Ascending aorta (tissue), 2 donors: ENCODE measurements at regions of chr21 and their contacts with region 1.

Region 1: GRCh38 chr21:42939582-42940410 is 14.4 kb upstream of the ERVH48-1 start:
- DNase-seq: peak; percentile 34 to 95
- H3K4me3 ChIP-seq: peak overlapping the region in 1 of 2 donors; percentile 22
- H3K27ac ChIP-seq: peak overlapping the region; percentile 39 to 50
- H3K4me1 ChIP-seq: peaks cover 2% of the 10 kb centered on the region in 2 donors
- H3K27me3 ChIP-seq: no peaks in the 10 kb centered on the region
- CTCF ChIP-seq: no peak

Region 2: DNA sequence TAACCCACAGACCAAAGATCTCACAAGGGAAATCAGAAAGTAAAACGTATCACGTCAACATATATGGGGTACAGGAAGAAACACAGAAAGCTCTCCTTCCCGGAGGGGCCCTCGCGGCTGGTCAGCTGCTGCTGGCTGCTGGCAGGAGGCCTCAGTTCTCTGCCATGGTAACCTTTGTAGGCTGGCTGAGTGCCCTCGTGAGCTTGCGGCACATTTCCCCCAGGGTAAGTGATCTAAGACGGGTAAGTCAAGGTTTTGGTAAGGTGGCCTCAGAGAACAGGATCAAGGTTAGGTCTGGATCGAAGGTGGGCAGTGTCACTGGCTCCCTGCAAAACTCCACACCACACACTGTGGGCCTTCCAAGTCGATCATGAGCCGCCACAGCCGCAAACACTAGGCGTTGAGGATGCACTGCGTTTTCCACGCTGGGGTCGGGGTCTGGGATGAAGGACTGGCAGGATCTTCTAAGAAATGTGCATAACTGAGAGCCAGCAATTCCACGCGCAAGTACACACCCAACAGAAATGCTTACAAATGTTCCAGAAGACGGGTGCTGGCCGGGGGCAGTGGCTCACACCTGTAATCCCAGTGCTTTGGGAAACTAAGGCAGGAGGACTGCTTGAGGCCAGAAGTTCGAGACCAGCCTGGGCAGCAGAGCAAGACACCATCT is 94.4 kb before region 1 on chr21:
- intact Hi-C with region 1: no loop called
- DNase-seq: no peak
- H3K4me3 ChIP-seq: no peak overlapping the region
- H3K27ac ChIP-seq: no peak overlapping the region
- H3K4me1 ChIP-seq: peaks cover 0 to 4% of the 10 kb centered on the region in 2 donors
- H3K27me3 ChIP-seq: no peaks in the 10 kb centered on the region
- CTCF ChIP-seq: no peak

Region 3: GRCh38 chr21:42892931-42893755 is 46.7 kb before region 1 on chr21 and contains the start of gene NDUFV3:
- intact Hi-C with region 1: loop called (anchors 2 kb)
- DNase-seq: peak; percentile 99 to 100
- H3K4me3 ChIP-seq: peak within 1 kb of the TSS; percentile 87 to 91
- H3K27ac ChIP-seq: peak within 1 kb of the TSS; percentile 90 to 97
- H3K4me1 ChIP-seq: peaks cover 0 to 3% of the 10 kb centered on the region in 2 donors
- H3K27me3 ChIP-seq: no peaks in the 10 kb centered on the region
- CTCF ChIP-seq: no peak
- total RNA-seq, gene NDUFV3: 60.7 TPM

Region 4: GRCh38 chr21:42991992-42992740 is 52.4 kb after region 1 on chr21:
- intact Hi-C with region 1: loop called (anchors 10 kb)
- DNase-seq: peak in 1 of 2 donors; percentile 70
- H3K4me3 ChIP-seq: no peak overlapping the region
- H3K27ac ChIP-seq: no peak overlapping the region
- H3K4me1 ChIP-seq: peaks cover 0 to 6% of the 10 kb centered on the region in 2 donors
- H3K27me3 ChIP-seq: no peaks in the 10 kb centered on the region
- CTCF ChIP-seq: no peak